ENCODE measurements at regions of chr9 and their contacts with region 1.

Region 1: DNA sequence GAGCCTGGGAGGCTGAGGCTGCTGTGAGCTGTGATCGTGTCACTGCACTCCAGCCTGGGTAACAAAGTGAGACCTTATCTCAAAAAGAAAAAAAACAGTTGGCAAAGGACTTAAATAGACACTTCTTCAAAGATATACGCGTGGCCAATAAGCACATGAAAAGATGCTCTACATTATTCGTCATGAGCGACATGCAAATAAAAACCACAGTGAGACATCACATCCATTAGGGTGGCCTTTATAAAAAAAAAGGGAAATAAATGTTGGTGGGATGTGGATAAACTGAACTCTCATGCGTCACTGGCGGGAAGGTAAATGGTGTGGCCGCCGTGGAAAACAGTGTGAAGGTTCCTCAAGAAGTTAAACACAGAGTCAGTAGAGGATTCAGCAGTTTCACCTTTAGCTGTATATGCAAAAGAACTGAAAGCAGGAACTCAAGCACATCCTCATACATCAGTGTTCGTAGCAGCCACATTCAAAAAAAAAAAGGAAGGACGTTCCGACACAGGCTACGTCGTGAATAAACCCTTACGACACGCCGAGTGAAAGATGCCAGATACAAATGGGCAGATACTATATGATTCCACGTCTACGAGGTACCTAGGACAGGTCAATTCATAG is 24.5 kb upstream of the NRARP start:
- DNase-seq: peak; percentile 91 to 93 (median 91)
- H3K4me3 ChIP-seq: peak overlapping the region in 1 of 3 experiments; percentile 47
- H3K4me3 Mint-ChIP-seq: peak overlapping the region in 1 of 2 donors; percentile 65
- H3K27ac ChIP-seq: peak overlapping the region; percentile 63 to 80
- H3K27ac Mint-ChIP-seq: peak overlapping the region; percentile 91 to 97 (median 94)
- H3K4me1 ChIP-seq: peaks cover 16% of the 10 kb centered on the region in 2 donors
- H3K4me1 Mint-ChIP-seq: peaks cover 17% of the 10 kb centered on the region
- H3K27me3 ChIP-seq: no peaks in the 10 kb centered on the region
- H3K27me3 Mint-ChIP-seq: peaks cover 0 to 1% (median 0%) of the 10 kb centered on the region in 3 donors
- CTCF ChIP-seq: no peak

Region 2: GRCh38 chr9:137295238-137295811 is 31.2 kb before region 1 on chr9:
- intact Hi-C with region 1: no loop called
- DNase-seq: peak in 2 of 3 donors; percentile 29 to 41
- H3K4me3 ChIP-seq: peak overlapping the region in 1 of 3 experiments; percentile 54
- H3K4me3 Mint-ChIP-seq: peak overlapping the region; percentile 34 to 74
- H3K27ac ChIP-seq: no peak overlapping the region
- H3K27ac Mint-ChIP-seq: peak overlapping the region in 1 of 7 donors; percentile 25
- H3K4me1 ChIP-seq: peaks cover 6 to 9% of the 10 kb centered on the region in 2 donors
- H3K4me1 Mint-ChIP-seq: peaks cover 13% of the 10 kb centered on the region
- H3K27me3 ChIP-seq: peaks cover 35 to 67% of the 10 kb centered on the region in 2 donors
- H3K27me3 Mint-ChIP-seq: peaks cover 68 to 70% (median 69%) of the 10 kb centered on the region in 3 donors
- CTCF ChIP-seq: peak; percentile 74

Region 3: GRCh38 chr9:137406876-137407589 is 80.5 kb after region 1 on chr9:
- intact Hi-C with region 1: loop called in 1 of 2 experiments (anchors 5 kb)
- DNase-seq: peak in 2 of 3 donors; percentile 43 to 66
- H3K4me3 ChIP-seq: no peak overlapping the region
- H3K4me3 Mint-ChIP-seq: peak overlapping the region in 1 of 2 donors; percentile 30
- H3K27ac ChIP-seq: no peak overlapping the region
- H3K27ac Mint-ChIP-seq: no peak overlapping the region
- H3K4me1 ChIP-seq: peaks cover 13% of the 10 kb centered on the region in 2 donors
- H3K4me1 Mint-ChIP-seq: peaks cover 11% of the 10 kb centered on the region
- H3K27me3 ChIP-seq: peaks cover 9 to 34% of the 10 kb centered on the region in 2 donors
- H3K27me3 Mint-ChIP-seq: peaks cover 28 to 57% (median 35%) of the 10 kb centered on the region in 3 donors
- CTCF ChIP-seq: peak; percentile 76

Measured in CD14-positive monocyte (primary cell).